Activated CD4-positive, alpha-beta T cell treated with anti-CD3 and anti-CD28 coated beads for 36 hours (primary cell): ENCODE measurements at regions of chr12 and their contacts with region 1.

Region 1: GRCh38 chr12:49967042-49967776 is 5.5 kb downstream of the AQP5 start:
- DNase-seq: peak; percentile 97
- ATAC-seq: peak; percentile 92
- H3K4me3 Mint-ChIP-seq: peak overlapping the region; percentile 34
- H3K27ac Mint-ChIP-seq: no peak overlapping the region
- H3K4me1 Mint-ChIP-seq: no peaks in the 10 kb centered on the region
- H3K27me3 Mint-ChIP-seq: peaks cover 32% of the 10 kb centered on the region

Region 2: DNA sequence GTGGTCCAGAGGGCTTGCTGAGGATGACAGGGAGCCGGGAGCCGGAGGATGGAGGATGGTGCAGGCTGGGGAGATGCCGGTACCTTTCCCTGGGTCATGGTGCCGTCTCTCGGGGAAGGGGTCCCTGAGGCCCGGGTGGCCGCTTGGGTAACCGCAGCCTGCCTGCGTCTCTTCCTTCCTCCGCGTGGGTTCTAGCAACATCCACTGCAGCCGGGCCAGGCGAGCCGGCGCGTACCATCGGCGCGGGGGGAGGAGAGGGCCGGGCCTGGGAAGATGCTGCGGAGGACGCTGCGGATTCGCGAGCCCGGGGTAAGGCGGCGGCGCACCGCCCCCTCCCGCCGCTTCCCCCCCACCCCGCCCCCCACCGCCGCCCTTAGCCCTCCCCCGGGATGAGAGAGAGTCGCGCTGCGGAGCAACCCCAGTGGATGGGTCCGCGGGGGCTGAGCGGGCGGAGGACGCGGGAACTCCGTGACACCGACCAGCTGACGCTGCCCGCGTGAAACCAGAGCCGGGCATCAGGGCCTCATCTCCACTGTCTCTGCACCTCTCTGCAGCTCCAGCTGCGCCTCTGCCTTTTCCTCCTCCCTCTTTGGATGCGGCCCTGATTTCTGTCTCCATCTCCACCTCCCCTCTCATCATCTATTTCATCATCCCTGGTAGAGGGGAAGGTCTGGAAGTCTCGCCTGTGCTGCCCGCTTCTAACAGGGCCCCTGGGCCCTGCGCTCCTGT is 63.4 kb before region 1 on chr12 and contains the start of gene FAIM2:
- CTCF ChIA-PET with region 1: interaction called, 12 read pairs
- POLR2A ChIA-PET with region 1: no interaction called
- intact Hi-C with region 1: no loop called
- DNase-seq: peak; percentile 68
- ATAC-seq: peak; percentile 75
- H3K4me3 Mint-ChIP-seq: peak within 1 kb of the TSS; percentile 57
- H3K27ac Mint-ChIP-seq: peak within 1 kb of the TSS; percentile 3
- H3K4me1 Mint-ChIP-seq: peaks cover 13% of the 10 kb centered on the region
- H3K27me3 Mint-ChIP-seq: no peaks in the 10 kb centered on the region
- total RNA-seq, gene FAIM2: 0.53 to 0.91 TPM

Region 3: DNA sequence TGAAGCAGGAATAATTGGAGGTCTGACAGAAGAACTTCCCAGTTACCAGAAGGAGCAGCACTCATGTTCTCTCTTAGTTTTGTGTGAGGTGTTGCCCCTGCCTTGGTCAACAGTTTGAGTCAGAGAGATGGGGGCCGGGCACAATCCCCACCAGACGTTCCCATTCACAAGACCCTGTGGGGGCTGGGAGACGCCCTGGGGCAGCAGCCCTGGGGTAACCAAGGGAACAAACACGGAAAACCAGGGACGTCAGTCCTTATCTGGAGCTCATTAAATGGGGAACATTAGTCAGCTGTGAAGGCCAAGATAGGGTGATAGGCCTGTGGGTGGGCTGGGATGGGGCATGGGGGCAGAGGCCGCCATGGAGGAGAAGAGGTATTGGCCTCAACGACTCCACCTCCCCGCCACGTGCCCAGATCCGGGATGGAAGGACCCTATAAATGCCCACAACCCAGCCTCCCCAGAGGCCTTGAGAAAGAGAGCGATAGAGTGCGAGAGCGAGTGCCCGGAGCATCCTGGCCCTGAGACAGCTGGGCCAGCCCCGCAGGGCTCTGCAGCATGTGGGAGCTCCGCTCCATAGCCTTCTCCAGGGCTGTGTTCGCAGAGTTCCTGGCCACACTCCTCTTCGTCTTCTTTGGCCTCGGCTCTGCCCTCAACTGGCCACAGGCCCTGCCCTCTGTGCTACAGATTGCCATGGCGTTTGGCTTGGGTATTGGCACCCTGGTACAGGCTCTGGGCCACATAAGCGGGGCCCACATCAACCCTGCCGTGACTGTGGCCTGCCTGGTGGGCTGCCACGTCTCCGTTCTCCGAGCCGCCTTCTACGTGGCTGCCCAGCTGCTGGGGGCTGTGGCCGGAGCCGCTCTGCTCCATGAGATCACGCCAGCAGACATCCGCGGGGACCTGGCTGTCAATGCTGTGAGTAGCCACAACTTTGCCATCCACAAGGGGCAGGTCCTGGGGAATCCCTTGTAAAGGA is 16.6 kb before region 1 on chr12 and contains the start of gene AQP2:
- CTCF ChIA-PET with region 1: interaction called, 74 read pairs
- POLR2A ChIA-PET with region 1: no interaction called
- intact Hi-C with region 1: loop called in 1 of 2 experiments (anchors 1 kb)
- DNase-seq: no peak
- ATAC-seq: no peak
- H3K4me3 Mint-ChIP-seq: no peak within 1 kb of the TSS
- H3K27ac Mint-ChIP-seq: no peak within 1 kb of the TSS
- H3K4me1 Mint-ChIP-seq: peaks cover 8% of the 10 kb centered on the region
- H3K27me3 Mint-ChIP-seq: peaks cover 12% of the 10 kb centered on the region
- total RNA-seq, gene AQP2: not detected

Region 4: DNA sequence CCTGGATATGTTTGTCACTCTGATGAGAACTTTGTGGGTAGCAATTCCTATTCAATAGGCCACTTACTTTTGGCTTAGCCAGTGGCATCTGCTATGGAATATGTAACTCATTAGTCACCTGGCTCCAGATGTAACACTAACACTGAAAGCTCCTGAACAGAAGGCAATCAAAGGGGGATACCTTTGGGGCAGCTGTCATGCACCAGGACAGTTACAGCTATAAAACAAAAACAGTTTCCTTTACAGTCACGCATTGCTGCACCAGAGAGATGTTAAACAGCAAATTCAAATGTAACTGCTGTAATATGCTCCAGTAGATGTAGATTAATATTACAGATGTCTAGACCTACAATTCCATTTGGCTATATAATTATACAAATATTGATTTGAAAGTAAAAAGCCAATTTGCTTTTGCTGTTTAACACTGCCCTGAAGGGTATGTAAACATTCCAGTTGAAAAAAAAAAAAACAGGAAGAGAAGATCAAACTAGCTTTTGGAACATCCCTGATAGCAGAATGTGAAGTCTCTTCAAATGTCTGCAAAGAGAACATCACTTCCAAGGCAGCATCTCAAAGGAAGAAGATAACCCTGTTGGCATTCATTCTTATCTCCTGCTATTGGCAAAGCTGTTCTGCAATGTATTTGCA is 39.7 kb after region 1 on chr12:
- CTCF ChIA-PET with region 1: interaction called, 16 read pairs
- POLR2A ChIA-PET with region 1: no interaction called
- intact Hi-C with region 1: no loop called
- DNase-seq: no peak
- ATAC-seq: no peak
- H3K4me3 Mint-ChIP-seq: no peak overlapping the region
- H3K27ac Mint-ChIP-seq: no peak overlapping the region
- H3K4me1 Mint-ChIP-seq: peaks cover 10% of the 10 kb centered on the region
- H3K27me3 Mint-ChIP-seq: no peaks in the 10 kb centered on the region

Region 5: DNA sequence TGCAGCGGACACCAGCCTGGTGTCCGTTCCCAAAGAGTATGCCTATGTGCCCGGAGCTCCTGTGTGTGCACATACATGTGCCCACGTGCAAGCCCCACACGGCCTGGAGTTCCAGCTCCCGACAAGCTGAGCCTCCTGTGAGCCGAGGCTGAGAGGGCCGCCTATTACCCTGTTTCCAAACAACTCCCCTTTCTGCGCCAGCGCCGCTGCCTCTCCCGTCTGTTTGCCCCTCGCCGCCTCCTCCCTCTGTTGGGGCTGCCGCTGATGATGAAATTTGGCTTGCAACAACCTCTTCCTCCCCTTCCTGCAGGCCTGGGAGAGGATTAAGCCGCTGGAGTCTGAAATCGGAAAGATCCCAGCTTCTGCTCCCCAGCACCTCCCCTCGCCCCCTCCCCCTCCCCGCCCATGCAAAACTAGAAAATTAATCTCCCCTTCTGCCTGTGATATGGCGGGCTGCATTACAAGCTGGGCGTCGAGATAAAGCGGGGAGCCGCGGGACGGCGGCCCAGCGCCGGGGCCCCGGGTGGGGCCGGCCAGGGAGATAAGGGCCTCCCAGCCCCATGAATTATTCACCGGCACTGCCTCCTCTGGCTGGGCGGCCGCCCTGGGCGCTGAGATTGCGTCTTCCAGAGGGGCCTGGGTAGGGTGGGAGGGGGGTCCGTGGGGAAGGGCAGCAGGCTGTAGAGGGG is 83.3 kb after region 1 on chr12:
- CTCF ChIA-PET with region 1: interaction called, 36 read pairs
- POLR2A ChIA-PET with region 1: no interaction called
- intact Hi-C with region 1: no loop called
- DNase-seq: peak; percentile 21
- ATAC-seq: no peak
- H3K4me3 Mint-ChIP-seq: no peak overlapping the region
- H3K27ac Mint-ChIP-seq: no peak overlapping the region
- H3K4me1 Mint-ChIP-seq: peaks cover 2% of the 10 kb centered on the region
- H3K27me3 Mint-ChIP-seq: peaks cover 40% of the 10 kb centered on the region